AG04450 (cell line): ENCODE measurements at regions of chr14 and their contacts with region 1.

Region 1: DNA sequence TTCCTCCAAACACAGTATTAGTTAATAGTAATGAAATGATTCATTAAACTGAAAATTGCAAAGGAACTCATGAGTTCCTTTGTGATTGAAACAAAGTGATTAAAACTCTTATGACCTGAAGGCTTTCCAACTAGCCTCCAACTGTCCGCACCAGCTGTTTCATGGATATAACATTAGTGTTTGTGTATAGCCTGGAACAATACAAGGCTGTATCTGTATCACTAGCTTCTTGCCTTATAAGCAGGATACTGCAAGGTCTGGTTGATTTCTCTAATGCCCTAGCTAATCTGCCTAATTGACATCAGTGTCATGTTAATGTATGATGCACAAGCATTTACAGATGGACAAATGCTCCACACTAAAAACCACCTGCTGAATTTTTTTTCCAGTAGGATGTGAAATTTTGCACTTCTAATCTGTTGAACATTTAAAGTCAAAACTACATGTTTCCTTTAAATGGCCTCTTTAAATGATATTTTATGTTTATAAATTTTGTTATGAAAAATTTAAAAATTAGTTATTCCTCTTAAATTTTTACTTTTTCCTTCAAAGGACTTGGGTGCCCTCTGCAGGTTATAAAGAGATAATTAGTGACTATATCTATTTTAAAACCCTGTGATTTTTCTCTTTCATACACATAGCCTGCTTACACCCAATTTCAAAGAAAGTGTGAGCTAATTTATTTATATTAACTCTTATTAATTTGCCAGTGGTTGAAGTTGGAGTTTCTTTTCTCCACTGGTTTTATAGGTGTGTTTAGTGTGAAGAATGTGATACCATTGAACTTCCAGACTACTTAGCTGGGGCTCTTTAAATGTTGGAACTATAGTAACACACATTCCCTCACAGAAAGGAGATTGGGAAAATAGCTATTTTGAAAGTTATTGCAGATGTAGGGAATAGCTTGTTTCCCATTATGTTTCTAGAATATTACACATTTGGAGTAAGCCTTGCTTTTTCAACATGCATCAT is 25.4 kb downstream of the AP5M1 start:
- DNase-seq: no peak
- H3K4me3 ChIP-seq: no peak overlapping the region
- H3K27ac ChIP-seq: no peak overlapping the region
- H3K27me3 ChIP-seq: no peaks in the 10 kb centered on the region
- CTCF ChIP-seq: peak; percentile 50

Region 2: GRCh38 chr14:56659964-56660551 is 634.1 kb before region 1 on chr14:
- CTCF ChIA-PET with region 1: interaction called, 10 read pairs
- POLR2A ChIA-PET with region 1: no interaction called
- DNase-seq: peak; percentile 1
- H3K4me3 ChIP-seq: no peak overlapping the region
- H3K27ac ChIP-seq: no peak overlapping the region
- H3K27me3 ChIP-seq: no peaks in the 10 kb centered on the region
- CTCF ChIP-seq: peak; percentile 78

Region 3: GRCh38 chr14:57139173-57139572 is 155.0 kb before region 1 on chr14:
- CTCF ChIA-PET with region 1: no interaction called
- POLR2A ChIA-PET with region 1: no interaction called
- DNase-seq: no peak
- H3K4me3 ChIP-seq: no peak overlapping the region
- H3K27ac ChIP-seq: no peak overlapping the region
- H3K27me3 ChIP-seq: no peaks in the 10 kb centered on the region
- CTCF ChIP-seq: no peak